Activated CD8-positive, alpha-beta T cell treated with anti-CD3 and anti-CD28 coated beads for 36 hours (primary cell): ENCODE measurements at regions of chr9 and their contacts with region 1.

Region 1: GRCh38 chr9:122453677-122454135 is 24.0 kb downstream of the OR1J1 start:
- DNase-seq: no peak
- ATAC-seq: no peak
- H3K4me3 Mint-ChIP-seq: no peak overlapping the region
- H3K27ac Mint-ChIP-seq: no peak overlapping the region
- H3K4me1 Mint-ChIP-seq: no peaks in the 10 kb centered on the region
- H3K27me3 Mint-ChIP-seq: peaks cover 20% of the 10 kb centered on the region
- CTCF ChIP-seq: no peak

Region 2: GRCh38 chr9:122356627-122357026 is 97.1 kb before region 1 on chr9:
- CTCF ChIA-PET with region 1: no interaction called
- POLR2A ChIA-PET with region 1: no interaction called
- intact Hi-C with region 1: no loop called
- DNase-seq: no peak
- ATAC-seq: no peak
- H3K4me3 Mint-ChIP-seq: no peak overlapping the region
- H3K27ac Mint-ChIP-seq: no peak overlapping the region
- H3K4me1 Mint-ChIP-seq: peaks cover 6% of the 10 kb centered on the region
- H3K27me3 Mint-ChIP-seq: peaks cover under 1% of the 10 kb centered on the region
- CTCF ChIP-seq: peak; percentile 19

Region 3: GRCh38 chr9:122370869-122371755 is 82.6 kb before region 1 on chr9 and contains the start of gene PTGS1:
- CTCF ChIA-PET with region 1: no interaction called
- POLR2A ChIA-PET with region 1: no interaction called
- intact Hi-C with region 1: loop called (anchors 10 kb)
- DNase-seq: peak; percentile 26
- ATAC-seq: peak; percentile 51
- H3K4me3 Mint-ChIP-seq: peak within 1 kb of the TSS; percentile 26
- H3K27ac Mint-ChIP-seq: no peak within 1 kb of the TSS
- H3K4me1 Mint-ChIP-seq: peaks cover 7% of the 10 kb centered on the region
- H3K27me3 Mint-ChIP-seq: peaks cover 23% of the 10 kb centered on the region
- CTCF ChIP-seq: no peak
- total RNA-seq, gene PTGS1: 0.23 TPM in 1 of 2 experiments, not detected in the other

Region 4: DNA sequence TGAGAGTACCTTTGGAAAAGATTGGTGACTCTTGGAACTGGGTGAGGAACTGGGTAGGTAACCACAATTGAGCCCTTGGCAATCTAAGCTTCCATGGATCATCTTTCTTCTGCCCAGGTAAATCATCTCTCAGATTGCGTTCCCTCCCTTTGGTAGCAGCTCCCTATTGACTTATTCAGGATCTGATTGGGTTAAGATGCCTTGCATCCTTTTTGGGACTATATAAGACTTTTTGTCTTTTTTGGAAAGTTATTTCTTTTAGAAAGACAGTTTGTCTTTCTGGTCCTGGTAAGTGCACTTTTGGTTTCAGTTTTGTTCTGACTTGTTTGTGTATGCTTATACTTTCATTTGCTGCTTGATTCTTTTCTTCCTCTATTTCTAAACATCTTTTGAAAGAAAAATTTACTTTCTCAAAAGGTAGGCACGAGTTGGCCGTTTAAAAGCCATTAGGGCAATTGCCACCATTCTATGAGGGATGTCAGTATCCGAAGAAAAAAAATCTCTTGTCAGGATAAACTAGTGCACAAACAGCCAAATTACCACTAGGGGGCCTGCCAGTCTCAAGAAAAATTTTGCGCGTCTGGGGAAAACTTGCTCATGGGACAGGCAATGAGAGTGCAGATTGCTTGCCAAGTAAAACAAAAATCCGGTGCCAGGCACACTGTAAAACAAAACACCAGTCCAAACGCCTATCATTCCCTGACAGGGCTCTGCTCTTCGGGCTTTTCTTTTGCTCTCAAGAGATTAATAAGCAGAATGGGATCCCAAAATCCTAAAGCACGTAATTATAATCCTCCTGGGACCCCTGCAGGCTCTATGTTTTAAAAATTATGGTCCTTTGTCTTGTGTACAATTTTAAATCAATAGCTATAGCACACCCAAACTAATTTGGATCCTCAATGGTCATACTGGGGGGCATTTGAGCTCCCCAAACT is 11.2 kb after region 1 on chr9:
- CTCF ChIA-PET with region 1: interaction called, 19 read pairs
- POLR2A ChIA-PET with region 1: no interaction called
- intact Hi-C with region 1: no loop called
- DNase-seq: peak; percentile 79
- ATAC-seq: peak; percentile 79
- H3K4me3 Mint-ChIP-seq: peak overlapping the region; percentile 77
- H3K27ac Mint-ChIP-seq: peak overlapping the region; percentile 82
- H3K4me1 Mint-ChIP-seq: peaks cover 14% of the 10 kb centered on the region
- H3K27me3 Mint-ChIP-seq: peaks cover 27% of the 10 kb centered on the region
- CTCF ChIP-seq: peak; percentile 88